Aorta (tissue), 5 donors: ENCODE measurements at regions of chrX and their contacts with region 1.

Region 1: GRCh38 chrX:20066968-20067708 is 49.6 kb downstream of the MAP7D2 start:
- DNase-seq: no peak
- ATAC-seq: no peak
- H3K4me3 ChIP-seq: no peak overlapping the region
- H3K27ac ChIP-seq: no peak overlapping the region
- H3K4me1 ChIP-seq: no peaks in the 10 kb centered on the region
- H3K27me3 ChIP-seq: no peaks in the 10 kb centered on the region

Region 2: GRCh38 chrX:19990556-19991349 is 76.4 kb before region 1 on chrX and contains the start of gene BCLAF3:
- intact Hi-C with region 1: loop called in 1 of 2 experiments (anchors 5 kb)
- DNase-seq: peak; percentile 93 to 96
- ATAC-seq: peak; percentile 99
- H3K4me3 ChIP-seq: peak within 1 kb of the TSS; percentile 45 to 46
- H3K27ac ChIP-seq: peak within 1 kb of the TSS in 1 of 2 donors; percentile 32
- H3K4me1 ChIP-seq: peaks cover 0 to 3% of the 10 kb centered on the region in 2 donors
- H3K27me3 ChIP-seq: no peaks in the 10 kb centered on the region
- total RNA-seq, gene BCLAF3: 16.8 to 22.0 TPM

Region 3: DNA sequence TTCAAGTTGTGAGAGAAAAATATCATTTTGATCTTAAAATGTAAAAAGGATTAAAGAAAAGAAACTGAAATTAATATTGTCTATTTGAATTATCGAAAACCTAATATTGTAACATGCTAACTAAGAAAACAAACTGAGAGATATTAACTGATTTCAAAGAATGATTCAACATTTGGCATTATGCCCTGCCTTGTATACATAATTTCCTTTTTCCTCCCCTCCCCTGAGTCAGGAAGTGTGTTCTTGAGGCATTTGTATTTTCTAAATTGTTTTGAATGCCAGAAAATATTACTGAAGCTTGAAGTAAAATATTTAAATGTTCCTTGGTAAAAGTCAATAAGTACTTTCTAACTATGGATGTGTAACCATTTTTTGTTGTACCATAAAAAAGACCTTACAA is 150.1 kb after region 1 on chrX:
- intact Hi-C with region 1: no loop called
- DNase-seq: no peak
- ATAC-seq: peak; percentile 65
- H3K4me3 ChIP-seq: no peak overlapping the region
- H3K27ac ChIP-seq: no peak overlapping the region
- H3K4me1 ChIP-seq: no peaks in the 10 kb centered on the region
- H3K27me3 ChIP-seq: no peaks in the 10 kb centered on the region